Naive thymus-derived CD4-positive, alpha-beta T cell (primary cell): ENCODE measurements at regions of chr10 and their contacts with region 1.

Region 1: DNA sequence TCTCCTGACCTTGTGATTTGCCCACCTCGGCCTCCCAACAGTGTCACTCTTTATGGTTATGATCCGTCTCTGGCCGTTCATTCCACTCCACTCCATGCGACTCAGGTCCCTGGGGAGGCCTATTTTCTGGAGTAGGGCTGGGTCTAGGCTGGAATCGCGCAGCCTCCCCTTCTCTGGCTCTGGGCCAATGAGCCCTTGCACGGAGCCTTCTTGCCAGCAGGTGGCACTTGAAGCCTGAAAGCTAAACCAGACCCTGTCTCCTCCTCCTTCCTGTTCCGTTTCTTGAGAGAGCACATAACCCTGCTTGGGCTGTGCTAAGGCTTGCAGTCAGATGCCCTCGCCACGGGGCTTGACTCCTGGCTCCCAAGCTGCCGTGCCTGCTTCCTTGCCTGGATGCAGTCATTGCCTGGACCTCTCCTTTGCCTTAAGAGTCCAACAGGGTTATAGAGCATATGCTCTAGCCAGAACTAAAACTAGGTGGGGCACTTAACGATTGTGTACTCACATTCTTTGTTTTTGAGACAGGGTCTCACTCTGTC is 9.6 kb upstream of the DNAJB12 start:
- DNase-seq: peak; percentile 66 to 90 (median 85)
- ATAC-seq: peak; percentile 100
- H3K4me3 ChIP-seq: peak overlapping the region; percentile 31
- H3K4me3 Mint-ChIP-seq: peak overlapping the region in 9 of 10 donors; percentile 4 to 74 (median 45)
- H3K27ac ChIP-seq: peak overlapping the region; percentile 61
- H3K27ac Mint-ChIP-seq: peak overlapping the region; percentile 15 to 94 (median 81)
- H3K4me1 ChIP-seq: peaks cover 12% of the 10 kb centered on the region in 2 donors
- H3K4me1 Mint-ChIP-seq: peaks cover 7 to 25% (median 13%) of the 10 kb centered on the region in 7 donors
- H3K27me3 ChIP-seq: no peaks in the 10 kb centered on the region
- H3K27me3 Mint-ChIP-seq: peaks cover 0 to 5% (median 0%) of the 10 kb centered on the region in 5 donors

Region 2: DNA sequence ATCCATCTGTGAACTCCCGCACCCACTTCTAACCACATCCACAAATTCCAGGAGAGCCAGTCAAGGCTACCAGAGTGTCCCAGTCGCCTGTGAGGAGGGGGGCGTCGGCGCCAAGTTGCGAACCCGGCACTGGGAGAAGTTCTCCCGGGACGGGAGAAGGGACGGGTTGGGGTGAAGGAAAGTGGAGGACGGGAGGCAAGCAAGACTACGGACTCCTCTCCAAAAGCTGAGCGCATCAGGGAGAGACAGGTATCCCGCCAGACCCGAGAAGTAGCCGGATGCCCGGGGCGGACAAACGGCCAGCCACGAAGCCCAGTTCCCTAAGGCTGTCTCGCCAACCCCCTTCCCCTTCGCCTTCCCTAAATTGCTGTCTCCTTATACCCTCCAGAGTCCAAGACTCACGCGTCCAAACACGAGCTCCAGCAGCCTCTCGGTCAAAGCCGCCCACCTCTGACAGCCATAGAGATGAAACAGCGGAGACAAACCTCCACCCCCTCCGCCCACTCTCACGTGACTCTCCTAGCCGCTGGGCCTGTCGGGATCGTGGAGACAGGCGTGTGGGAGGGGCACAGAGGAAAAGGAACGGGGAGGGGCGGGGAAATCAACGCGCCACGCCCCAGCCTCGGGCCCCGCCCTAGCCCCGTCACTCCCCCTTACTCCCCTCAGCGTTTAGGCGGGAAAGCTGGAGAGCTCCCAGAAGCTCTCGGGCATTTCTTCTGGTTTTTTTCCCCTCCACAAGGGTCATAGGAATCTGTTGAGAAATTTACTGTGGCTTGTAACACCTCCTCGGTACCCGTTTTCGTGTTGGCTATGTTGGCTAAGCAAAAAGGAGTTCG is 261.5 kb after region 1 on chr10 and contains the start of gene MICU1:
- CTCF ChIA-PET with region 1: interaction called, 5 read pairs
- POLR2A ChIA-PET with region 1: no interaction called
- intact Hi-C with region 1: loop called (anchors 1 to 2 kb)
- DNase-seq: peak; percentile 74 to 93 (median 90)
- ATAC-seq: peak; percentile 100
- H3K4me3 ChIP-seq: peak within 1 kb of the TSS; percentile 97
- H3K4me3 Mint-ChIP-seq: peak within 1 kb of the TSS; percentile 97 to 100 (median 100)
- H3K27ac ChIP-seq: peak within 1 kb of the TSS; percentile 76
- H3K27ac Mint-ChIP-seq: peak within 1 kb of the TSS; percentile 83 to 99 (median 97)
- H3K4me1 ChIP-seq: peaks cover 11 to 16% of the 10 kb centered on the region in 2 donors
- H3K4me1 Mint-ChIP-seq: peaks cover 11 to 28% (median 16%) of the 10 kb centered on the region in 7 donors
- H3K27me3 ChIP-seq: no peaks in the 10 kb centered on the region
- H3K27me3 Mint-ChIP-seq: peaks cover 0 to 8% (median 0%) of the 10 kb centered on the region in 5 donors
- total RNA-seq, gene MICU1: 20.8 to 39.6 (median 26.3) TPM

Region 3: GRCh38 chr10:72834183-72834825 is 470.0 kb after region 1 on chr10:
- CTCF ChIA-PET with region 1: interaction called, 41 read pairs
- POLR2A ChIA-PET with region 1: interaction called, 10 read pairs
- intact Hi-C with region 1: loop called (anchors 1 kb)
- DNase-seq: peak in 7 of 9 donors; percentile 28 to 61 (median 43)
- ATAC-seq: peak; percentile 73
- H3K4me3 ChIP-seq: no peak overlapping the region
- H3K4me3 Mint-ChIP-seq: no peak overlapping the region
- H3K27ac ChIP-seq: no peak overlapping the region
- H3K27ac Mint-ChIP-seq: no peak overlapping the region
- H3K4me1 ChIP-seq: no peaks in the 10 kb centered on the region
- H3K4me1 Mint-ChIP-seq: peaks cover 0 to 1% (median 0%) of the 10 kb centered on the region in 7 donors
- H3K27me3 ChIP-seq: no peaks in the 10 kb centered on the region
- H3K27me3 Mint-ChIP-seq: no peaks in the 10 kb centered on the region

Region 4: GRCh38 chr10:73060738-73061635 is 696.7 kb after region 1 on chr10:
- CTCF ChIA-PET with region 1: no interaction called
- POLR2A ChIA-PET with region 1: no interaction called
- intact Hi-C with region 1: loop called (anchors 1 kb)
- DNase-seq: peak in 4 of 9 donors; percentile 4 to 37 (median 12)
- ATAC-seq: peak; percentile 49
- H3K4me3 ChIP-seq: no peak overlapping the region
- H3K4me3 Mint-ChIP-seq: no peak overlapping the region
- H3K27ac ChIP-seq: no peak overlapping the region
- H3K27ac Mint-ChIP-seq: peak overlapping the region in 1 of 9 donors; percentile 21
- H3K4me1 ChIP-seq: peaks cover 0 to 3% of the 10 kb centered on the region in 2 donors
- H3K4me1 Mint-ChIP-seq: peaks cover 4 to 19% (median 10%) of the 10 kb centered on the region in 7 donors
- H3K27me3 ChIP-seq: no peaks in the 10 kb centered on the region
- H3K27me3 Mint-ChIP-seq: no peaks in the 10 kb centered on the region

Region 5: GRCh38 chr10:73246783-73247508 is 882.6 kb after region 1 on chr10 and contains the start of gene DNAJC9:
- CTCF ChIA-PET with region 1: no interaction called
- POLR2A ChIA-PET with region 1: no interaction called
- intact Hi-C with region 1: loop called in 1 of 2 experiments (anchors 2 kb)
- DNase-seq: peak; percentile 93 to 98 (median 96)
- ATAC-seq: peak; percentile 95
- H3K4me3 ChIP-seq: peak within 1 kb of the TSS; percentile 71
- H3K4me3 Mint-ChIP-seq: peak within 1 kb of the TSS; percentile 92 to 100 (median 97)
- H3K27ac ChIP-seq: peak within 1 kb of the TSS; percentile 86
- H3K27ac Mint-ChIP-seq: peak within 1 kb of the TSS; percentile 91 to 98 (median 96)
- H3K4me1 ChIP-seq: peaks cover 27 to 37% of the 10 kb centered on the region in 2 donors
- H3K4me1 Mint-ChIP-seq: peaks cover 30 to 69% (median 55%) of the 10 kb centered on the region in 7 donors
- H3K27me3 ChIP-seq: no peaks in the 10 kb centered on the region
- H3K27me3 Mint-ChIP-seq: no peaks in the 10 kb centered on the region
- total RNA-seq, gene DNAJC9: 14.5 to 47.7 (median 26.8) TPM